GM18951 (cell line): ENCODE measurements at regions of chr1 and their contacts with region 1.

Region 1: GRCh38 chr1:94801919-94802546 is 18.1 kb upstream of the SLC44A3 start:
- POLR2A ChIP-seq: no peak

Region 2: DNA sequence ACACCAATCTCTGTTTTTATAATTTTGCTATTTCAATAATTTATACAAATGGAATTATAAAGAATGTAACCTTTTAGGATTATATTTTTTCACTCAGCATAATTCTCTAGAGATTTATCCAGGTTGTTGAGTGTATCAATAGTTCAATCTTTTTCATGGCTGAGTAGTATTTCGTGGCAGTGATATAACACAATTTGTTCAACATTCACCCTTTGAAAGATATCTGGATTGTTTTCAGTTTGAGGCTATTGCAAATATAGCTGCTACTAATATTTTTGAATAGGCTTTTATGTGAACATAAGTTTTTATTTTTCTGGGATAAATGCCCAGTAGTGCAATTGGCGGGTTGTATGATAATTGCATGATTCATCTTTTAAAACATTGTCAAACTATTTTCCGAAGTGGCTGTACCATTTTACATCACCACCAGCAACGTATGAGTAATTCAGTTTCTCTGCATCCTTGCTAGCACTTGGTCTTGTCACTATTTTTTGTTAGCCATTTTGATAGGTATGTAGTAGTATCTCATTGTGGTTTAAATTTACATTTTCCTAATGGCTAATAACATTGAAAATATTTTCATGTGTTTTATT is 439.5 kb before region 1 on chr1:
- in situ Hi-C with region 1: no loop called
- POLR2A ChIP-seq: no peak

Region 3: DNA sequence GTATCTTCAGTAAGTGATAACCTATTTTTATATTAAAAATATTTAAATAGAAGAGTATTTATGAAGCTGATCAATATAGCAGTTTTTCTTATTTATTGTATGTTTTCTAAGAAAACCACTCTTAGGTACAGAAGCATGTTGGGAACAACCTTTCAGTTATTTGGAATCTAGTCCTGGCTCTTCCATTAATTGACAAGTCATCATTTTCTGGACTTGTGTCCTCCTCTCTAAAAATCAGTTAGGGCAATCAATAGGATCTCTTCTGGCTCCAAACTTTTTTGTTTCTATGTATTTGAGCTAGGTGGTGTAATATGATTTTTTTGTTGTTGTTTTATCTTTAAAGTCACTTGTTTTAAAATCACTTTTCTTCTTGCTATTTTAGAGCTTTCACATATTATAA is 326.8 kb before region 1 on chr1:
- in situ Hi-C with region 1: loop called (anchors 5 kb)
- POLR2A ChIP-seq: no peak

Region 4: GRCh38 chr1:94698759-94699502 is 103.1 kb before region 1 on chr1:
- in situ Hi-C with region 1: no loop called
- POLR2A ChIP-seq: no peak